ENCODE measurements at regions of chr17 and their contacts with region 1.

Region 1: DNA sequence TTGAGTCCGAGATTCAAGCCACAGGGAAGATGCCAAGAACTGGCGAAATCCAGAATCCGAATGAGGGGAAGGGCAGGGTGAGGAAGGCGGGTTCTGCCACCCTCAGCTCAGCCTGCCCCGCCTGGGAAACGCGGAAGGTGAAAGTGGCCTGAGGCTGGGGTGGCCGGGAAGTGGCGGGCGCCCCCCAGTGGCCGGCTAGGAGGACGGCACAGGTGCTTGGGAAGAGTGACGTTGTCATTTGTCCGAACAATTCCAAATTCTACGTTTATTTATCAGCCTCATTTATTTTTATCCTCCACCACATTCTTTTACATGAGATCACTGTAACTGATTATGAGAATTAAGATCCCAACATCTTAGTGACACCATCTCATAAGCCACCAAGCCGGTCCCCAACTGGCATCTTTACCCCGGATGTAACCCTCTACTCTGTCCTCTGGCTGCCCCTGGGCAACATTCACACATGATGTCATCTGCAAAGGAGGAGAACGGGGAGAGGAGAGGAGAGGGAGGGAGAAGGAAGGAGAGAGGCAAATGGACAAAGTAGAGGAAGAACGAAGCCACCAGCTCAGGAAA is 21.3 kb downstream of the SRCIN1 start:
- DNase-seq: peak in 1 of 2 experiments; percentile 89
- H3K4me3 ChIP-seq: peak overlapping the region in 1 of 4 experiments; percentile 34; a peak in 2 of 8 replicates
- H3K27ac ChIP-seq: no peak overlapping the region
- H3K4me1 ChIP-seq: peaks cover 3 to 45% (median 26%) of the 10 kb centered on the region in 4 experiments
- H3K27me3 ChIP-seq: peaks cover 4 to 18% (median 13%) of the 10 kb centered on the region in 4 experiments
- CTCF ChIP-seq: peak; percentile 88 to 94 (median 92)
- EP300 ChIP-seq: no peak
- POLR2A ChIP-seq: no peak
- RAD21 ChIP-seq: peak; percentile 68 to 78

Region 2: DNA sequence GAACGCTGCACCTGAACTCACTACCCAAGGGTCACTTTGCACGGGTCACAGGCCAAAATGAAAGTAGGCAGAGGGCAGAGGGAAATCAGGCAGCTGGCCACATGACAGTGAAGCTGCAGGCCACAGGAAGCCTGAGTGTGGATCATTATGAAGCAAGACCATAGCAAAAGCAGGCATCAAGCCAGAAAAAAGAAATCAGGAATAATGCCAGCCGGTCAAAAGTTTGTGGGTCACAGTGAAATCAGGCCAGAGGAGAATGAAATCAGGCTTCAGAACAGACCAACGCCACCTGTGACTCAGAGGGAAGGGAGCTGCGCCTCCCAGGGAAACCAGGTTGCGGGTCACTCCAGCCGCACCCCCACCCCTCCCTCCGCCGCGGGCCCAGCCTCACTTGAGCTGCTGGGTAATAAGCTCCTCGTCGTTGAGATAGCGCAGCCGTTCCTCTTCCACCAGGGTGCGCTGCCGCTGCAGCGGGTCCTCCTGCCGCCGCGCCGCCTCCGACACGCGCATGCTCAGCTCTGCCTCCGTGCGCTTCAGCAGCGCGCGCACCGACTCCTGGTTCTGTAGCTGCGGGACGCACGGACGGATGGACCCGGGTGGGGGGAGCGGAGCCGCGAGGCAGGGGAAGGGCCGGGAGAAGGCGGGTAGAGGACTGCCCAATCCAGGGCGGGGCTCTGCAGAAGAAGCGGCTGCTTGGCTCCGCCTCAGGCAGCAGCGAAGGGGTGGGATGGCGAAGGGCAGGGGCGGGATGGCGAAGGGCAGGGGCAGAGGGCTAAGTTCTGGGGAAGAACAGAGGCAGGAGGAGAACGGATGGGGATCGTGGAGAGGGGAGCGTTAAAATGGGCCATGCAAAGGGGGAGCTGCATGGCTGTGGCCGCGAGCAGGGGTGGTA is 26.4 kb before region 1 on chr17:
- CTCF ChIA-PET with region 1: interaction called, 914 read pairs
- POLR2A ChIA-PET with region 1: interaction called, 5 read pairs
- DNase-seq: peak; percentile 93 to 97
- H3K4me3 ChIP-seq: peak overlapping the region; percentile 37 to 69 (median 58); a peak in 7 of 8 replicates
- H3K27ac ChIP-seq: no peak overlapping the region
- H3K4me1 ChIP-seq: peaks cover 4 to 37% (median 27%) of the 10 kb centered on the region in 4 experiments
- H3K27me3 ChIP-seq: peaks cover 34 to 52% (median 48%) of the 10 kb centered on the region in 4 experiments
- CTCF ChIP-seq: peak; percentile 95 to 97 (median 96)
- EP300 ChIP-seq: 0 out of 3 replicates have a peak, but pooled peaks of 1 of the 2 experiments have one; percentile 58
- POLR2A ChIP-seq: no peak
- RAD21 ChIP-seq: peak; percentile 75 to 85

Region 3: GRCh38 chr17:38572669-38573365 is 11.6 kb before region 1 on chr17:
- CTCF ChIA-PET with region 1: interaction called, 914 read pairs
- POLR2A ChIA-PET with region 1: interaction called, 4 read pairs
- DNase-seq: no peak
- H3K4me3 ChIP-seq: peak overlapping the region; percentile 27 to 57 (median 42)
- H3K27ac ChIP-seq: no peak overlapping the region
- H3K4me1 ChIP-seq: peaks cover 6 to 15% (median 12%) of the 10 kb centered on the region in 4 experiments
- H3K27me3 ChIP-seq: peaks cover 37 to 97% (median 92%) of the 10 kb centered on the region in 4 experiments
- CTCF ChIP-seq: no peak
- EP300 ChIP-seq: peak in 1 of 2 experiments; percentile 10; a peak in 1 of 3 replicates
- POLR2A ChIP-seq: no peak
- RAD21 ChIP-seq: no peak

Region 4: GRCh38 chr17:38598536-38598935 is 14.1 kb after region 1 on chr17:
- CTCF ChIA-PET with region 1: interaction called, 403 read pairs
- POLR2A ChIA-PET with region 1: interaction called, 32 read pairs
- DNase-seq: peak; percentile 88 to 93
- H3K4me3 ChIP-seq: no peak overlapping the region
- H3K27ac ChIP-seq: no peak overlapping the region
- H3K4me1 ChIP-seq: peaks cover 16 to 57% (median 51%) of the 10 kb centered on the region in 4 experiments
- H3K27me3 ChIP-seq: peaks cover 2 to 14% (median 13%) of the 10 kb centered on the region in 4 experiments
- CTCF ChIP-seq: no peak
- EP300 ChIP-seq: peak in 1 of 2 experiments; percentile 70; a peak in 1 of 3 replicates
- POLR2A ChIP-seq: no peak
- RAD21 ChIP-seq: peak in 1 of 2 experiments; percentile 18; a peak in 2 of 4 replicates

Region 5: GRCh38 chr17:39339272-39339671 is 754.8 kb after region 1 on chr17:
- CTCF ChIA-PET with region 1: no interaction called
- POLR2A ChIA-PET with region 1: no interaction called
- DNase-seq: no peak
- H3K4me3 ChIP-seq: no peak overlapping the region
- H3K27ac ChIP-seq: no peak overlapping the region
- H3K4me1 ChIP-seq: no peaks in the 10 kb centered on the region
- H3K27me3 ChIP-seq: no peaks in the 10 kb centered on the region
- CTCF ChIP-seq: no peak
- EP300 ChIP-seq: no peak
- POLR2A ChIP-seq: no peak
- RAD21 ChIP-seq: no peak

Measured in H1 (cell line).